CD4-positive, alpha-beta T cell (primary cell): ENCODE measurements at regions of chr3 and their contacts with region 1.

Region 1: GRCh38 chr3:67113802-67114407 is 115.8 kb downstream of the KBTBD8 start:
- DNase-seq: peak; percentile 56 to 83 (median 72)
- ATAC-seq: peak; percentile 74
- H3K4me3 ChIP-seq: no peak overlapping the region
- H3K4me3 Mint-ChIP-seq: no peak overlapping the region
- H3K27ac ChIP-seq: no peak overlapping the region
- H3K27ac Mint-ChIP-seq: no peak overlapping the region
- H3K4me1 ChIP-seq: no peaks in the 10 kb centered on the region
- H3K4me1 Mint-ChIP-seq: no peaks in the 10 kb centered on the region
- H3K27me3 ChIP-seq: peaks cover 0 to 11% of the 10 kb centered on the region in 2 experiments
- H3K27me3 Mint-ChIP-seq: peaks cover 37% of the 10 kb centered on the region
- CTCF ChIP-seq: peak; percentile 95

Region 2: DNA sequence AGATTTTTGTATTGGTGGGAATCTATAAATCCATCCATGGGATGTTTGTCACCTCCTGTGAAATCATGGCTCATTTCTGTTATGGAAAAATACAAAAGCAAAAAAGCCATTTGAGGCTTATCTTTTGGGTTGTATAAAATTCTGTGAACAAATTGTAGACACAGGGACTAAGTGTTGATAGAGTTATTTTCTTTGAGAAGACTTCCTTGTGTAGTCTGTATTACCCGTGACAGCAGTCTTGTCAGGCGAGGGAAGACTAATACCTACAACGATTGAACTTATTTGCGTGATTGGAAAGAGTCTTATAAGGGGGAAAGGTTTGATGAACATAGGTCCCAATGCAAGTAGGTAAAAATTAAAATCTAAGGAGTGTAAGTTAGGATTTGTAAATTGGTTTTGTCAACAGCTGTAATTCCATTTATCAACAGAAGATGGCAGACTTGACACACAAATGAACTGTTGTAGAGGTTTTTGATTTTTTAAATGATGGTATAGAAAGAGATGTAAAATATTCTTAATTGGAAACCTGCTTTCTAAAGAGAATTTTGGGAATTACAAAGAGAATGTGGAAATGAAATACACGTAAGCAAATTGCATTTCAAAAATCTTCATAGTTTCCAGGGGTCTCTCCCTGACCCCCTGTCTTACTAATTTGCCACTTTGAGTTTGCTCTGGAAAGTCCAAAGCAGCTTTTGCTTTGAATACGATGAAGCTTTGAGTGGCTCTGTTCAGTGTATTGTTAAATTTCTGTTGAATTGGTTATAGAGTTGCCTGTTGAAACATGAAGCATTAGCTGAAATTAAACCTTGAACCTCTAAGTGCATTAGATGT is 859.9 kb before region 1 on chr3:
- CTCF ChIA-PET with region 1: no interaction called
- POLR2A ChIA-PET with region 1: no interaction called
- intact Hi-C with region 1: loop called in 1 of 2 experiments (anchors 10 kb)
- DNase-seq: peak in 3 of 14 experiments; percentile 41 to 66 (median 61)
- ATAC-seq: no peak
- H3K4me3 ChIP-seq: no peak overlapping the region
- H3K4me3 Mint-ChIP-seq: no peak overlapping the region
- H3K27ac ChIP-seq: no peak overlapping the region
- H3K27ac Mint-ChIP-seq: no peak overlapping the region
- H3K4me1 ChIP-seq: no peaks in the 10 kb centered on the region
- H3K4me1 Mint-ChIP-seq: peaks cover 5% of the 10 kb centered on the region
- H3K27me3 ChIP-seq: no peaks in the 10 kb centered on the region
- H3K27me3 Mint-ChIP-seq: no peaks in the 10 kb centered on the region
- CTCF ChIP-seq: peak; percentile 93

Region 3: DNA sequence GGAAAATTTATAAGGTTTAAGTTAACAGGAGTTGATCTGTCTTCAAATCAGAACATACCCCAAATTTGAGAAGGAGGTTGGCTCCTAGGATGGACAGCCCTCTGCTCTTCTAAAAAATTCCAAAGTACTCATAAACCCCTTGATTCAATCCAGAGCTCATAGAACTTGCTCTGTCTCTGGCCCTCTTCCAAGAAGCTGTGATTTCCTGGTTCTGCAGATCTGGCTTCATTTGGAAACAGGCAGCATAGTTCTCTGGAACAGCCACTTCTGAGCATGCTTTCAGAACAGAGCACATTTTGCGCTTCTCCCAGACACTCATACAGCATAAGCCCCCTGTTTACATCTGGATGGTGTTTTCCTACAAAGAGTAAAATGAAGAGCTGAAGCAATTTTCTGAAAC is 19.1 kb before region 1 on chr3:
- CTCF ChIA-PET with region 1: no interaction called
- POLR2A ChIA-PET with region 1: no interaction called
- intact Hi-C with region 1: no loop called
- DNase-seq: no peak
- ATAC-seq: no peak
- H3K4me3 ChIP-seq: no peak overlapping the region
- H3K4me3 Mint-ChIP-seq: no peak overlapping the region
- H3K27ac ChIP-seq: no peak overlapping the region
- H3K27ac Mint-ChIP-seq: no peak overlapping the region
- H3K4me1 ChIP-seq: no peaks in the 10 kb centered on the region
- H3K4me1 Mint-ChIP-seq: no peaks in the 10 kb centered on the region
- H3K27me3 ChIP-seq: no peaks in the 10 kb centered on the region
- H3K27me3 Mint-ChIP-seq: peaks cover 20% of the 10 kb centered on the region
- CTCF ChIP-seq: no peak

Region 4: GRCh38 chr3:67384760-67385397 is 271.0 kb after region 1 on chr3:
- CTCF ChIA-PET with region 1: no interaction called
- POLR2A ChIA-PET with region 1: no interaction called
- intact Hi-C with region 1: loop called in 1 of 2 experiments (anchors 10 kb)
- DNase-seq: peak in 12 of 14 experiments; percentile 11 to 57 (median 34)
- ATAC-seq: no peak
- H3K4me3 ChIP-seq: no peak overlapping the region
- H3K4me3 Mint-ChIP-seq: no peak overlapping the region
- H3K27ac ChIP-seq: no peak overlapping the region
- H3K27ac Mint-ChIP-seq: peak overlapping the region; percentile 6
- H3K4me1 ChIP-seq: no peaks in the 10 kb centered on the region
- H3K4me1 Mint-ChIP-seq: no peaks in the 10 kb centered on the region
- H3K27me3 ChIP-seq: no peaks in the 10 kb centered on the region
- H3K27me3 Mint-ChIP-seq: no peaks in the 10 kb centered on the region
- CTCF ChIP-seq: peak; percentile 37

Region 5: DNA sequence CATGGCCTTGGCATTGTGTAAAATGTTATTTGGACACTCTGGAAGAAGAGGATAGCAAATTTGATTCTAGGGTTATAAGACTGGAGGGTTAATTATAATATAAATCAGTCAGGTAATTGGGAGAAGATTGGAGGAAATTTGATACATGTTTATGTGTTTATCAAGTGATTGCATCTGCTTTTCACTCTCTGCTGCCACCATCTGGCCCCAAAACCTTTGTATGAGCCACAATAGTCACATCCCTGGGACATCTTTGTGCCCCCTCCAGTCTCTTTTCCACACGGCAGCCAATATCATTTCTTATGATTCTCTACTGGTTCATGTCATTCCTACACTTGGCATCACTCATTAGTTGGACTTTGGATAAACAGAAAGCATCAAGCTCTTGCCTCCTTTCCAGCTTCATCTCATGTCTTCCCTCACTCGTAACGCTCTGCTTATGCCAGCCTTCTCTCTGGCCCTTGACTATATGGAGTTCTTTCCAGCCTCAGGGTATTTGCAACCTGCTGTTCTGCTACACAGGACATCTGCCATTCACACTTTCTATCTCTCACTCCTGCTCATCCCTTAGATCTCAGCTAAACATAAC is 1142.8 kb after region 1 on chr3:
- CTCF ChIA-PET with region 1: no interaction called
- POLR2A ChIA-PET with region 1: no interaction called
- intact Hi-C with region 1: loop called (anchors 5 kb)
- DNase-seq: peak in 10 of 14 experiments; percentile 3 to 41 (median 15)
- ATAC-seq: no peak
- H3K4me3 ChIP-seq: no peak overlapping the region
- H3K4me3 Mint-ChIP-seq: no peak overlapping the region
- H3K27ac ChIP-seq: no peak overlapping the region
- H3K27ac Mint-ChIP-seq: no peak overlapping the region
- H3K4me1 ChIP-seq: no peaks in the 10 kb centered on the region
- H3K4me1 Mint-ChIP-seq: peaks cover 6% of the 10 kb centered on the region
- H3K27me3 ChIP-seq: no peaks in the 10 kb centered on the region
- H3K27me3 Mint-ChIP-seq: no peaks in the 10 kb centered on the region
- CTCF ChIP-seq: peak; percentile 57

Region 6: DNA sequence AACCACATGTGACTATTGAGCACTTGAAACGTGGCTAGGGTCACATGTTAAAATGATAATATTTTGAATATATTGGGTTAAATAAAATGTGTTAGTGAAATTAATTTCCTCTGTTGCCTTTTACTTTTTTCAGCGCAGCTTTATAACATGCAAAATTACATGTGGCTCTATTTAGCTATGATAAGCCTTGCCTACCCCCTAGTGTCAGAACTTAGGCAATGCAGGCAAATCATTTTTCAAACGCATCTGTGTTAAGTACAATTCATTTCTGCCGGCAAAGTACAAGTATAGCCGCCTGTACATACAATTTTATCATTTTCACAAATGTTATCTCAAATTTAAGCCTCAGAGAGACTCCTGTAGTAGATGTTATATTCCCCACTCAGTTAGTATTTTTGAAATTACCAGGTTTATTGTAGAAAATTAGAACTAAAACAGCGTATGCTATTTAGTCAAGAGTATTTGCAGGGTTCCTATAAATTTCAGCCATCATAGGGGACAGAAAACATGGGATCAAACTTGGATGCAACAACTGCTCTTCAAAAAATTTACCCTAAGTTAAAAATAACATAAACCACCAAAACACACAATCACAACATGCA is 1762.3 kb after region 1 on chr3:
- CTCF ChIA-PET with region 1: interaction called, 25 read pairs
- POLR2A ChIA-PET with region 1: no interaction called
- intact Hi-C with region 1: loop called (anchors 1 kb)
- DNase-seq: peak in 7 of 14 experiments; percentile 2 to 72 (median 31)
- ATAC-seq: peak; percentile 44
- H3K4me3 ChIP-seq: no peak overlapping the region
- H3K4me3 Mint-ChIP-seq: no peak overlapping the region
- H3K27ac ChIP-seq: no peak overlapping the region
- H3K27ac Mint-ChIP-seq: no peak overlapping the region
- H3K4me1 ChIP-seq: no peaks in the 10 kb centered on the region
- H3K4me1 Mint-ChIP-seq: no peaks in the 10 kb centered on the region
- H3K27me3 ChIP-seq: no peaks in the 10 kb centered on the region
- H3K27me3 Mint-ChIP-seq: peaks cover 39% of the 10 kb centered on the region
- CTCF ChIP-seq: peak; percentile 92